Pancreas (tissue), 10 donors: ENCODE measurements at regions of chr10 and their contacts with region 1.

Region 1: DNA sequence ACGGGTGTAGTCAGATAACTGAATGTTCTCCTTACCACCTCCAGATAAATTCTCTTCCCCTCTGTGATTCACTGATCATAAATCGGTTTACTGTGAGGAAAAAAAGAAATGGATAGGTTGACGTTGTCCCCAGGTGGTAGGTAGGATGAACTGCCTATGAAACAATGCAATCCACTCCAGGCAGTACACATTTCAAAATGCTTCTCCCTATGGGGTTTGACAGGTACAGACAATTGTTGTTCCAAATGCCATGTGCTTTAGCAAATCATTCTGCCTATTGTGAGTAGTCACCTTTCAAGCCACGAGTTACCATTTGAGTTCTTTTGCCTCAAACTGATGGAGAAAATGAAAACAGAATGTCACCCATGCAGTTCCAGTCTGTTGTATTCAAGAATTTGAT is 21.8 kb downstream of the VIM start:
- DNase-seq: no peak
- ATAC-seq: peak; percentile 33 to 72 (median 40)
- H3K4me3 ChIP-seq: no peak overlapping the region
- H3K27ac ChIP-seq: no peak overlapping the region
- H3K4me1 ChIP-seq: no peaks in the 10 kb centered on the region
- H3K27me3 ChIP-seq: no peaks in the 10 kb centered on the region
- CTCF ChIP-seq: peak in 2 of 4 donors; percentile 8 to 11

Region 2: GRCh38 chr10:16820421-16820820 is 429.4 kb before region 1 on chr10:
- intact Hi-C with region 1: loop called in 1 of 3 experiments (anchors 5 kb)
- DNase-seq: no peak
- ATAC-seq: no peak
- H3K4me3 ChIP-seq: no peak overlapping the region
- H3K27ac ChIP-seq: no peak overlapping the region
- H3K4me1 ChIP-seq: peaks cover 0 to 5% (median 0%) of the 10 kb centered on the region in 3 donors
- H3K27me3 ChIP-seq: no peaks in the 10 kb centered on the region
- CTCF ChIP-seq: no peak